AG04449 (cell line): ENCODE measurements at regions of chr2 and their contacts with region 1.

Region 1: DNA sequence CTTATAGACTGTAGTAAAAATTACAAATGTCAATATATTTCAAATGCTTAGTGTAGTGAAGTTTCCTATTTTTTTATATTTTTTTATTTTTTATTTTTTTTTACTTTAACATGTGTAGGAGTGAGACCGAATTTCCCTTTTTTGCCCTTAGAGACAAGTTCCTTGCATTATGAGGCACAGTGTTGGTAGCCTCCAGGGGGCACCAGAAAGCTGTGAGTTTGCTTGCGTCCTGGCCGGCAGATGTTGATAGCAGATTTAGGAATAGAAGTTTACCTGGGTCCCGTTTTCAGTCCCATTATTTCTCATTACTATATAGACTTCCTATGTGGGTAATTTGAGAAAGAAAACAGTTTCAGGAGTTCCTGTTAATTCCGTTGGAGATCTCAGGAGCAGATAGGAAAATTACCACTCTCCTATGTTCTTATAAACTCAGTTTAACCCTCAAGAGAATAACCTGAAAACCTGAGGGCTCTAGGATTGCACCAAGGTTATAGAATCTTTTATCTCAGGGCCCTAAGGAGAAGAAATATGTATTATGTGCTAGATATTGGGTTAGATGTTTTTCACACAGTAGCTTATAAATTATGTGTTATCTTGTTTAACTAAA is 157.5 kb upstream of the SESTD1 start:
- DNase-seq: peak; percentile 36
- H3K4me3 ChIP-seq: no peak overlapping the region
- CTCF ChIP-seq: peak; percentile 89

Region 2: GRCh38 chr2:179410552-179411356 is 11.4 kb before region 1 on chr2:
- CTCF ChIA-PET with region 1: interaction called, 34 read pairs
- POLR2A ChIA-PET with region 1: no interaction called
- DNase-seq: no peak
- H3K4me3 ChIP-seq: no peak overlapping the region
- CTCF ChIP-seq: peak; percentile 73

Region 3: DNA sequence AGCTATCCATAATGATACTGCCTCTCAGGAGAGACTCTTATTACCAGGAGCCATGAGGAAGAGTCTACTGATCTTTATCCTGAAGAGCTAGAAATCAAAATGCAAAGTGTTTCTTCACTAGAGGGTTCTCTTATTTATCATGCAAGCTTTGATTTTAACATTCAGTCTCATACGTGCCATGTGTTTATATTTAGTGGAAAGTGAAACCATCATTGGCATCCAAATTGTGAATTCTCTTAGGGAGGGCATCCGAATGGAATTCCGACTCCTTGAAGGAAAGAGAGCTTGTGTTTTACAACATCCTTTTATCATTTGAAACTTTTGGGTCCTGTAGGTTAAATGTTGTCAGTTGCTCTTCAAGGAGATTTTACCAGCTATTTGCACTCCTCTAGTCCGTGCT is 12.9 kb after region 1 on chr2:
- CTCF ChIA-PET with region 1: interaction called, 48 read pairs
- POLR2A ChIA-PET with region 1: no interaction called
- DNase-seq: no peak
- H3K4me3 ChIP-seq: no peak overlapping the region
- CTCF ChIP-seq: no peak

Region 4: GRCh38 chr2:179440642-179441251 is 18.6 kb after region 1 on chr2:
- CTCF ChIA-PET with region 1: interaction called, 19 read pairs
- POLR2A ChIA-PET with region 1: no interaction called
- DNase-seq: no peak
- H3K4me3 ChIP-seq: no peak overlapping the region
- CTCF ChIP-seq: peak; percentile 45

Region 5: GRCh38 chr2:179745635-179746256 is 323.6 kb after region 1 on chr2:
- CTCF ChIA-PET with region 1: interaction called, 24 read pairs
- POLR2A ChIA-PET with region 1: no interaction called
- DNase-seq: no peak
- H3K4me3 ChIP-seq: no peak overlapping the region
- CTCF ChIP-seq: no peak

Region 6: DNA sequence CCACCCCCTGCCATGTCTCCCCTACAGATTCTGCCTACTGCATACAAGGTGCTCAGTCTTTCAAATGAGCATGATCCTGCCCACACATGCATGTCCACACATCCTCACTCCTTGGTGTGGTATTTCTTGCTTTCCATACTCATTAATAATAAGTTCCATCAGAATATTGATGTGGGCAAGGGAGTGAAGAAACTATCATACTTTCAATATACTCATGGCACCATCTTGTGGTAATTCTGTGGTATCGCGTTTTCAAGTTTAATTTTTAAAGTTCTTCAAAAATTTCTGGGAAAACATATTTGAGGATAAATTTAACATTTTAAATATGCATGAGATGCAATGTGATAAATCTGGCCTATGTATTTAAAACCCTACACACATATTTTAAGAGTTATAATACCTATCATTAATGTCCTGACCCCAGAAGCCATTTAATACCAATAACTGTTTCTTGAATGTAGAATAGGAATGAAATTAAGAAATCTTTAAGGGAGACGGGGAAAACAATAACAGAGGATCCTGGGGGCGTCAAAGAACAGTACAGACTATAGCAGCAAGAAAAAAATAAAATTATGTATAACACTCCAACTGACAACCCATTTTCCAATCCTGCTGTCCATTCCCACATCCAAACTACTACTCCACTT is 329.1 kb after region 1 on chr2:
- CTCF ChIA-PET with region 1: interaction called, 24 read pairs
- POLR2A ChIA-PET with region 1: no interaction called
- DNase-seq: no peak
- H3K4me3 ChIP-seq: no peak overlapping the region
- CTCF ChIP-seq: peak; percentile 38